ENCODE measurements at regions of chr3 and their contacts with region 1.

Region 1: GRCh38 chr3:149765762-149766334 is 13.6 kb upstream of the COMMD2 start:
- DNase-seq: no peak
- H3K4me3 ChIP-seq: no peak overlapping the region
- H3K27ac ChIP-seq: no peak overlapping the region
- H3K4me1 ChIP-seq: no peaks in the 10 kb centered on the region
- H3K27me3 ChIP-seq: no peaks in the 10 kb centered on the region
- CTCF ChIP-seq: peak; percentile 74

Region 2: DNA sequence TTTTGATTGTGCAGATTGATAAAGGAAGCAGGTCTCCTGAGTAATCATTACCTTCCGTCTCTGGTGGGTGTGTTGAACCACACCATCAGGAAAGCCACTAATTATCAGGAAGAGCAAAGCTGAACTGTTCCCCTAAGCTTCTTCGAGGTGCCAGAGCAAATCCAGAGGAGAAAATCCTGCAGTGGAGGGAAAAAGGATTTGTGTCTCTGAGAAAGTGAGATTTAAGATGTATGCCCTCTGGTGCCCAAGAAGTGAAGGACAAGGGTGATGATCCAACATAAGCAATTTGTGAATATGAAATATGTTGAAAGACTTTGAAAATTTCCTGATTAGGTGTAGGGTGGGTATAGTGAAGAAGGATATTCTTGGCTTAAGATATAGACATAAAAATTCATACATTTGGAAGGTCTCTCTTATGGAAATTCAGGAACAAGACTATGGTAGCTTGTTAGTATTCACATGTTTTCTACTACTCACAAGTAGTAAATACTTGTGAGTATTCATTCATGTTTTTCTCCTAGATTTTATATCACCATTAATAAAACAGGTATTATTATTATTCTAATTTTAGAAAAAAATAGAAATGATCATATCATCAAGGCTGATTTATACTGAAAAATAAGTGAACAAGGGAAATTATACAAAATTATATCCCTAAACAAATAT is 48.3 kb before region 1 on chr3:
- CTCF ChIA-PET with region 1: no interaction called
- POLR2A ChIA-PET with region 1: no interaction called
- intact Hi-C with region 1: no loop called
- DNase-seq: peak; percentile 58 to 61
- H3K4me3 ChIP-seq: no peak overlapping the region
- H3K27ac ChIP-seq: no peak overlapping the region
- H3K4me1 ChIP-seq: 0 out of 2 replicates have a peak, but pooled peaks cover 4% of the 10 kb centered on the region
- H3K27me3 ChIP-seq: no peaks in the 10 kb centered on the region
- CTCF ChIP-seq: peak; percentile 81

Region 3: DNA sequence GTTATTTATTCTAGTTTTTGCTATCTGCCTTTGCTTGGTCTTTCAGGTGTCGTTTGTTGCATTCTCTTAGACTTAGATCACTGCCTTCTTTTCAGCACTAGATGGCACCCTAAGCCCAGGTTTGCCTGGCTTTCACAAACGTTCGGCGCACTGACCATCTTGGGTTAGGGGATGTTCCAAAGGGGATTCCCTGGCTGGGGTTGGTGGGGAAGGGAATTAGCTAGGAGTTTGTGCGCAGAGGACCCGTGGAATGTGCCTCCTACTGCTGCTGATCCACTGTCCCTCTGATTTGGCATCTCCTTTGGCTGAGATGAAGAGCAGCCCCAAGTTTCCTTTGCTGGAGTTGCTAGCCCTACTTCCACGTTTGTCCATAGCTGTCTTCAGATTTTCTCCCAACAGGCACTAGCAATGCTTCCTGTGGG is 171.0 kb after region 1 on chr3:
- CTCF ChIA-PET with region 1: interaction called, 3 read pairs
- POLR2A ChIA-PET with region 1: no interaction called
- intact Hi-C with region 1: loop called (anchors 10 kb)
- DNase-seq: peak in 1 of 2 experiments; percentile 44
- H3K4me3 ChIP-seq: no peak overlapping the region
- H3K27ac ChIP-seq: no peak overlapping the region
- H3K4me1 ChIP-seq: no peaks in the 10 kb centered on the region
- H3K27me3 ChIP-seq: no peaks in the 10 kb centered on the region
- CTCF ChIP-seq: peak; percentile 76

Region 4: GRCh38 chr3:150183678-150184425 is 418.0 kb after region 1 on chr3:
- CTCF ChIA-PET with region 1: no interaction called
- POLR2A ChIA-PET with region 1: no interaction called
- intact Hi-C with region 1: loop called (anchors 5 kb)
- DNase-seq: peak; percentile 58
- H3K4me3 ChIP-seq: peak overlapping the region; percentile 54
- H3K27ac ChIP-seq: 0 out of 2 replicates have a peak overlapping the region, but pooled peaks have one; percentile 17
- H3K4me1 ChIP-seq: peaks cover 18% of the 10 kb centered on the region
- H3K27me3 ChIP-seq: no peaks in the 10 kb centered on the region
- CTCF ChIP-seq: peak; percentile 64; the same call in 1 of the 2 replicates

Region 5: GRCh38 chr3:150329408-150329807 is 563.6 kb after region 1 on chr3:
- CTCF ChIA-PET with region 1: no interaction called
- POLR2A ChIA-PET with region 1: no interaction called
- intact Hi-C with region 1: no loop called
- DNase-seq: no peak
- H3K4me3 ChIP-seq: no peak overlapping the region
- H3K27ac ChIP-seq: no peak overlapping the region
- H3K4me1 ChIP-seq: peaks cover 20% of the 10 kb centered on the region
- H3K27me3 ChIP-seq: no peaks in the 10 kb centered on the region
- CTCF ChIP-seq: no peak

Measured in PC-9 (cell line).